CD8-positive, alpha-beta T cell (primary cell): ENCODE measurements at regions of chr12 and their contacts with region 1.

Region 1: DNA sequence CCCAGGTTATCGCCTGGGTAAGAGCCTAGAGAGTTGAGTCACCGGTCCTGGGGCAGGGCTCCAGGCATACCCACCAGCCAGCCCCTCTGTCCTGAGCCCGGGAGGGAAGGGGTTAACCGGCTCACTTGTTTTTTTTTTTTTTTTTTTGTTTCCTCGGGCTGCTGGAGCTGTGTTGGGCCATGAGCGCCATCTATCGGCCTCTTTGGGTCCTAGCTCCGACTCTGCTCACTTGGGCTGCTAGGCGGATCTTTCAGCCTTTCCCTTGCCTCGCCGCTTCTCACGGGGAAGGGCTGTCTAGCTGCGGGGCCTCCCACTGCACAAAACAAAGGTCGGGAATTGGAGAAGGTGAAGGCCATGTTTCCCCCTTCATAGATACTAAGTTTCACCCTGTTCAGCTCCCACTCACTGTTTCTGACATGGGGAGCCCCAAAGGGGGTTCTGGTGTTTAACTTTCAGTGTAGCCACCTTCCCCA is 2.8 kb upstream of the SMUG1 start:
- DNase-seq: peak; percentile 61 to 92 (median 78)
- ATAC-seq: peak; percentile 74
- H3K4me3 ChIP-seq: no peak overlapping the region
- H3K4me3 Mint-ChIP-seq: no peak overlapping the region
- H3K27ac ChIP-seq: no peak overlapping the region
- H3K27ac Mint-ChIP-seq: no peak overlapping the region
- H3K4me1 ChIP-seq: peaks cover 9% of the 10 kb centered on the region
- H3K4me1 Mint-ChIP-seq: peaks cover 24% of the 10 kb centered on the region
- H3K27me3 ChIP-seq: peaks cover 6 to 15% of the 10 kb centered on the region in 2 experiments
- H3K27me3 Mint-ChIP-seq: peaks cover 39% of the 10 kb centered on the region
- CTCF ChIP-seq: peak; percentile 68

Region 2: GRCh38 chr12:53701518-53702260 is 489.9 kb before region 1 on chr12:
- CTCF ChIA-PET with region 1: no interaction called
- POLR2A ChIA-PET with region 1: no interaction called
- intact Hi-C with region 1: loop called in 1 of 2 experiments (anchors 5 kb)
- DNase-seq: peak; percentile 52 to 86 (median 77)
- ATAC-seq: peak; percentile 92
- H3K4me3 ChIP-seq: no peak overlapping the region
- H3K4me3 Mint-ChIP-seq: no peak overlapping the region
- H3K27ac ChIP-seq: no peak overlapping the region
- H3K27ac Mint-ChIP-seq: no peak overlapping the region
- H3K4me1 ChIP-seq: peaks cover 3% of the 10 kb centered on the region
- H3K4me1 Mint-ChIP-seq: peaks cover 5% of the 10 kb centered on the region
- H3K27me3 ChIP-seq: peaks cover 19 to 24% of the 10 kb centered on the region in 2 experiments
- H3K27me3 Mint-ChIP-seq: peaks cover 77% of the 10 kb centered on the region
- CTCF ChIP-seq: peak; percentile 83

Region 3: DNA sequence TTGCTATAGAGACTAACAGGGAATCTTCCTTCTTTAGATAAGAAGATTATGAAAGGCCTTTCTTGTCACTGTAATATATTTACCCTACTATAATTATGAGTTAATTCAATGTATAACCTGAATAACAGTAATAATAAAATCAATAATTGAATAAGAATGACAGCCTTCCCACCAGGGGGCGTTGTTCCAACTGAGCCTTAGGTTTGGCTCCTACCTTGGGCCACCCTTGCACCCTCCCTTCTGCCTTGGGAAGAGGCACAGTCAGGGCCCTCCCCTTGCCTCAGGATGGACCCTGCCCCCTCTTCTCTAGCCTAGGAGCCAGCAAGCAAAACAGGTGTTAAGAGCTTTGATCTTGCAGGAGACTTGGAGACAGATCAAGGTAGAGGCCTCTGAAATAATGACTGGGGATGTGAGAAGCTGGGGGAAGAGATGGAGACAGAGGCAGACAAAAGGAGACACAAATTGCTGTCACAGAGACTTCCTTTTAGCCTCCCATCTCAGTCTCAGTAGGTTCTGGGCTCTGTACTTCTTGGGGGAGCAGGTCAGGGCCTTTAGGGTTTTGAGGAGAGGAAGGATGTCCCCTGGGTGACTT is 399.8 kb before region 1 on chr12:
- CTCF ChIA-PET with region 1: interaction called, 8 read pairs
- POLR2A ChIA-PET with region 1: no interaction called
- intact Hi-C with region 1: loop called in 1 of 2 experiments (anchors 2 kb)
- DNase-seq: peak in 8 of 9 experiments; percentile 1 to 53 (median 33)
- ATAC-seq: no peak
- H3K4me3 ChIP-seq: no peak overlapping the region
- H3K4me3 Mint-ChIP-seq: no peak overlapping the region
- H3K27ac ChIP-seq: no peak overlapping the region
- H3K27ac Mint-ChIP-seq: no peak overlapping the region
- H3K4me1 ChIP-seq: no peaks in the 10 kb centered on the region
- H3K4me1 Mint-ChIP-seq: no peaks in the 10 kb centered on the region
- H3K27me3 ChIP-seq: peaks cover 0 to 4% of the 10 kb centered on the region in 2 experiments
- H3K27me3 Mint-ChIP-seq: peaks cover 17% of the 10 kb centered on the region
- CTCF ChIP-seq: peak; percentile 54

Region 4: GRCh38 chr12:54032627-54033100 is 158.9 kb before region 1 on chr12 and contains the start of gene HOXC5:
- CTCF ChIA-PET with region 1: interaction called, 256 read pairs
- POLR2A ChIA-PET with region 1: interaction called, 3 read pairs
- intact Hi-C with region 1: loop called (anchors 1 kb)
- DNase-seq: peak; percentile 40 to 82 (median 64)
- ATAC-seq: peak; percentile 66
- H3K4me3 ChIP-seq: peak within 1 kb of the TSS; percentile 22 to 35
- H3K4me3 Mint-ChIP-seq: peak within 1 kb of the TSS; percentile 67
- H3K27ac ChIP-seq: no peak within 1 kb of the TSS
- H3K27ac Mint-ChIP-seq: no peak within 1 kb of the TSS
- H3K4me1 ChIP-seq: peaks cover 28% of the 10 kb centered on the region
- H3K4me1 Mint-ChIP-seq: peaks cover 26% of the 10 kb centered on the region
- H3K27me3 ChIP-seq: peaks cover 58 to 61% of the 10 kb centered on the region in 2 experiments
- H3K27me3 Mint-ChIP-seq: peaks cover 72% of the 10 kb centered on the region
- CTCF ChIP-seq: peak; percentile 85
- total RNA-seq, gene HOXC5: not detected

Region 5: DNA sequence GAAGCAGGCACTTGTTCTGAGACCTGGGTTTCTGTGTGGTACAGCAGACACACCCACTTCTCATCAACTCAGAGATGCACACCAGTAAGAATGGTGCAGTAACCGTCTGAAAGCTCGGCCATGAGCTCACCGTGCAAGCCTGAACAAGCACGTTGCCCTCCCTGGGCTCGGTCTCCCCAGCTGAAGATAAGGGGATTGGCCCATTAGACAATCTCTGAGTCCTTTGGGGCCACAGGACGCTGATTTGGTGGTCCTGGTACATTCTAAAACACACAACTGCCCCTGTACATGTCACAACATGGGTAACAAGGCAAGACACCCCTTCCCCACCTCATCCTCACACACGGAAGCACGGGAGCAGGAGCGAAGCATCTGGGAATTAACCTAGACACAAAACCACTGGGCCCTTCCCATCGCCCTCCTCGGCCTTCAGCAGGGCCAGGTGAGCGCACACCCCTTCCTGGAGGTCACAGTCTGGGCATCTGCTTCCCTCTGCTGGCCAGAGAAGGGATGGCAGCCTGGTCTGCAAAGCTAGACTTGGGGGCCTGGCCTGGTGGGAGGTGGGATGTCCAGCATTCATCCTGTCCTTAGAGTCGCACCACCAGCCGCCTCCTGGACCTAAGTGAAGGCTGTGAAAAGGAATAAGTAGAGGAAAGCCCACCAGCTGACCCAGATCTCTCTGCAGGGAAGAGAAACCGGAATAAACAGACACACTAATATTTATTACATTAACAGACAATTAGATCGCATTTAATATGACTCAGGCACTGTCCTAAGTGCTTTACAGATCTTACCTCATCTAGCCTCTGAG is 16.1 kb after region 1 on chr12:
- CTCF ChIA-PET with region 1: interaction called, 63 read pairs
- POLR2A ChIA-PET with region 1: interaction called, 3 read pairs
- intact Hi-C with region 1: no loop called
- DNase-seq: peak; percentile 58 to 85 (median 80)
- ATAC-seq: peak; percentile 96
- H3K4me3 ChIP-seq: no peak overlapping the region
- H3K4me3 Mint-ChIP-seq: no peak overlapping the region
- H3K27ac ChIP-seq: no peak overlapping the region
- H3K27ac Mint-ChIP-seq: no peak overlapping the region
- H3K4me1 ChIP-seq: no peaks in the 10 kb centered on the region
- H3K4me1 Mint-ChIP-seq: peaks cover 3% of the 10 kb centered on the region
- H3K27me3 ChIP-seq: peaks cover 0 to 13% of the 10 kb centered on the region in 2 experiments
- H3K27me3 Mint-ChIP-seq: peaks cover 39% of the 10 kb centered on the region
- CTCF ChIP-seq: peak; percentile 85

Region 6: DNA sequence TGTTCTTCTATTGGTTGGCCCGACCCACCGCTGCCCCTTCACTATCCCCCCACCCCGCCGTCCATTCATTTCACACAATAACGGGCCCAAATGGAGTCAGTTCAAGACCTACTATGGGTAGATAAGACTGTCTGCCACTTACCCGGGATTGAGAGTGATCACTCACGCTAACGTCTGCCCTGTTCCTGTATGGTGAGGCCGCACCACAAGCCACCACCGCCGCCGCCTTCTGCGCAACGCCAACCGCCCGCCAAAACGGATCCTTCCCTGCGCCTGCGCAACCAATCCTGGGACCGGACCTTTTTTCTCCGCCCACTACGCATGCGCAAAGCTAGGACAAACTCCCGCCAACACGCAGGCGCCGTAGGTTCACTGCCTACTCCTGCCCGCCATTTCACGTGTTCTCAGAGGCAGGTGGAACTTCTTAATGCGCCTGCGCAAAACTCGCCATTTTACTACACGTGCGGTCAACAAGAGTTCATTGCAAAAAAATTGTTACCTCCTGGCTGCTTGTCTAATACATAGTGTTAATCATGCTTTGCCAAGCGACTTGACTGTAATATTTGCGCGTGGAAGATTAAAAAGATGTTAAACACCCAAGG is 88.4 kb after region 1 on chr12 and contains the start of gene CBX5:
- CTCF ChIA-PET with region 1: no interaction called
- POLR2A ChIA-PET with region 1: no interaction called
- intact Hi-C with region 1: no loop called
- DNase-seq: peak; percentile 99 to 100 (median 100)
- ATAC-seq: peak; percentile 47
- H3K4me3 ChIP-seq: peak within 1 kb of the TSS; percentile 83 to 93
- H3K4me3 Mint-ChIP-seq: no peak within 1 kb of the TSS
- H3K27ac ChIP-seq: peak within 1 kb of the TSS; percentile 92 to 100
- H3K27ac Mint-ChIP-seq: no peak within 1 kb of the TSS
- H3K4me1 ChIP-seq: peaks cover 52% of the 10 kb centered on the region
- H3K4me1 Mint-ChIP-seq: peaks cover 14% of the 10 kb centered on the region
- H3K27me3 ChIP-seq: no peaks in the 10 kb centered on the region
- H3K27me3 Mint-ChIP-seq: no peaks in the 10 kb centered on the region
- CTCF ChIP-seq: no peak
- total RNA-seq, gene CBX5: 26.1 to 26.7 TPM